Heart left ventricle (tissue), 16 donors: ENCODE measurements at regions of chr5 and their contacts with region 1.

Region 1: DNA sequence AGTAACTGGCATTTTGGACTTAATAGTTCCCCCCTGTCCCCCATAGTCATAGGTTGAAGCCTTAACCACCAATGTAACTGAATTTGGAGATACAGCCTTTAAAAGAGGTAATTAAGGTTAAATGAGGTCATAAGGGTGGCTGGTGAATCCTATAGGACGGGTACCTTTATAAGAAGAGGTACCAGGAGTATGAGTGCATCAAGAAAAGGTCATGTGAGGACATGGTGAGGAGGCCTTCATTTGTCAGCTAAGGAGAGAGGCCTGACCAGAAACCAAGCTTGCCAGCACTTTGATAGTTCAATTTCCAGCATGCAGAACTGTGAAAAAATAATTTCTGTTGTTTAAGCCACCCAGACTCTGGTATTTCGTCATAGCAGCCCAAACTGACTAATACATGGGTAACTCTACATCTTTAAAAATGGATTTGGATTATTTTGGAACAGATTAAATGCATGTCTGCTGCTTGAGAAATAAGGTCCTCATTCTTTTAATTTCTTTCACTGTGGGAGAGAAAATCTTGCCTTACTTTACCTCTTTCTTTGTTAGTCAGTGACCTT is 9.7 kb downstream of the RASA1 start:
- DNase-seq: no peak
- ATAC-seq: no peak
- H3K4me3 ChIP-seq: no peak overlapping the region
- H3K27ac ChIP-seq: no peak overlapping the region
- H3K4me1 ChIP-seq: peaks cover 0 to 42% (median 15%) of the 10 kb centered on the region in 12 donors
- H3K27me3 ChIP-seq: no peaks in the 10 kb centered on the region
- CTCF ChIP-seq: no peak
- POLR2A ChIP-seq: no peak

Region 2: GRCh38 chr5:87210743-87211430 is 66.5 kb before region 1 on chr5:
- intact Hi-C with region 1: no loop called
- DNase-seq: no peak
- ATAC-seq: no peak
- H3K4me3 ChIP-seq: no peak overlapping the region
- H3K27ac ChIP-seq: no peak overlapping the region
- H3K4me1 ChIP-seq: no peaks in the 10 kb centered on the region
- H3K27me3 ChIP-seq: no peaks in the 10 kb centered on the region
- CTCF ChIP-seq: no peak
- POLR2A ChIP-seq: no peak

Region 3: DNA sequence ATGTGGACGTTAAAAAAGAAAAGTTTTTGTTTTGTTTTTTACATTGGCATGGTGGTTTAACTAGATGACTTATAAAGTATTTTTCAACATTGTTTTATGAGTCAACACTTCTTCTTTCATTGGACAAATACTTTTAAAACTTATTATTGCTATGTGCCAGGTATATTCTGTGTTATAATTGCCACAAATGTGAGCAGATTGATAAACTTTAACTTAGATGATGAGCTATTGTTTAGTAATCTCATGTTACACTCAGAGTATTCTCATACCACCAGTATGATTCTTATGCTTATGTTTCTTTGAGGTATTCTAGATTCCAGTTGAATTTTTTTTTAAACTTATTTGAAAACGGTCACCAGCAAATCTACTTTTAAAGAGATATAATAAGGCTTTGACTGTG is 50.6 kb after region 1 on chr5:
- intact Hi-C with region 1: loop called in 1 of 10 experiments (anchors 10 kb)
- DNase-seq: no peak
- ATAC-seq: no peak
- H3K4me3 ChIP-seq: no peak overlapping the region
- H3K27ac ChIP-seq: no peak overlapping the region
- H3K4me1 ChIP-seq: peaks cover 0 to 23% (median 4%) of the 10 kb centered on the region in 12 donors
- H3K27me3 ChIP-seq: no peaks in the 10 kb centered on the region
- CTCF ChIP-seq: no peak
- POLR2A ChIP-seq: no peak

Region 4: GRCh38 chr5:87361031-87361443 is 83.7 kb after region 1 on chr5:
- intact Hi-C with region 1: loop called in 1 of 10 experiments (anchors 5 kb)
- DNase-seq: no peak
- ATAC-seq: peak in 1 of 4 donors; percentile 66
- H3K4me3 ChIP-seq: no peak overlapping the region
- H3K27ac ChIP-seq: no peak overlapping the region
- H3K4me1 ChIP-seq: peaks cover 0 to 8% (median 0%) of the 10 kb centered on the region in 12 donors
- H3K27me3 ChIP-seq: no peaks in the 10 kb centered on the region
- CTCF ChIP-seq: no peak
- POLR2A ChIP-seq: no peak